ENCODE measurements at regions of chr19 and their contacts with region 1.

Region 1: GRCh38 chr19:39297654-39298634 is 1.7 kb downstream of the IFNL1 start:
- DNase-seq: no peak
- ATAC-seq: peak; percentile 49
- H3K4me3 ChIP-seq: no peak overlapping the region
- H3K27ac ChIP-seq: no peak overlapping the region
- H3K4me1 ChIP-seq: no peaks in the 10 kb centered on the region; the same call in 1 of the 2 replicates
- H3K27me3 ChIP-seq: peaks cover 15% of the 10 kb centered on the region
- CTCF ChIP-seq: no peak

Region 2: DNA sequence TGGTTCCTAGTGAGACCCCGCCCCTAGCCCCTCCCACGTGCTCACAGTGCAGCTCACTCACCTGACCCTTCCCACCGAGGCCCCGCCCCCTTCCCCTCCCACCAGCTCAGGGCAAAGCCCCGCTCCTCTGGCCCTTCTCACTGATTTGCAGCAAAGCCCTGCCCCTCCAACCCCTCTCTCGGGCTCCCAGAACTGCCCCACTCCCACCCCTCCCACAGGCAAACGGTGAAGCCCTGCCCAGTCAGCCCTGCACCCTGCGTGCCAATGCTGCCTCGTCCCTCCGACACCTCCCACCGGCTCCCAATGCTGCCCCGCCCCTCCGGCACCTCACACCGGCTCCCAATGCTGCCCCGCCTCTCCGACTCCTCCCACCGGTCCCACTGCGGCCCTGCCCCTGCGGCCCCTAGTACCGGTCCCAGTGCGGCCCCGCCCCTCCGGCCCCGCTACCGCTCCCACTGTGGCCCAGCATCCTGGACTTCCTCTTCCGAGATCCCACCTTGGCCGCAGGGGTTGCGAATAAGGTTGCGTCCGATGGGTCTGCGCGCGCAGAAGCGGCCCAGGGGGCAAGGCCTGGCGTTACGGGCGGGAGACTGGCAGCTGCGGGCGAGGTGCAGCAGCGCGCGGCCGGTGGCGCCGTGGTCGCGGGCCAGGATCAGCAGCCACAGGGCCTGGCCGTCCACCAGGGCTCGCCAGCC is 266.4 kb before region 1 on chr19:
- CTCF ChIA-PET with region 1: no interaction called
- POLR2A ChIA-PET with region 1: no interaction called
- in situ Hi-C with region 1: no loop called
- intact Hi-C with region 1: no loop called
- DNase-seq: peak; percentile 100
- ATAC-seq: peak; percentile 93
- H3K4me3 ChIP-seq: peak overlapping the region; percentile 46 to 72
- H3K27ac ChIP-seq: peak overlapping the region; percentile 91
- H3K4me1 ChIP-seq: peaks cover 24% of the 10 kb centered on the region
- H3K27me3 ChIP-seq: no peaks in the 10 kb centered on the region
- CTCF ChIP-seq: no peak

Region 3: DNA sequence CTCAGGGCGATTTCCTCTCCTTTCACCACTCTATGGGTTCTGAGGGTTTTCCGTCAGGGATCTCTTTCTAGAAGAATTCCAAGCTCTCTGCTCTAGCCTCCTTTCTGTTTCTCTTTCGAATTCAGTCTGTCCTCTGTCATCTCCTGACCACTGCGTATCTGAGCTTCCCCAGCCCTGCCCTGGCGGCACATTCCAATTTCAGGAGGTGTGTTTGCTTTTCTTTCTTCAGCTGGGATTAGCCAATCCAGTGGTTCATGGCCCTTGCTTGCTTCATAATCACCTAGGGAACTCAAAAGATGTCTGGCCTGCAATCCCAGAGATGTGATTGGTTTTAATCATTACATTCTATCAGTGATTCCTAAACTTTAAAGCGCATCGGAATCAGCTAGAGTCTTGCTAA is 20.3 kb before region 1 on chr19:
- CTCF ChIA-PET with region 1: interaction called, 5 read pairs
- POLR2A ChIA-PET with region 1: interaction called, 13 read pairs
- in situ Hi-C with region 1: no loop called
- intact Hi-C with region 1: no loop called
- DNase-seq: no peak
- ATAC-seq: peak; percentile 27
- H3K4me3 ChIP-seq: no peak overlapping the region
- H3K27ac ChIP-seq: no peak overlapping the region
- H3K4me1 ChIP-seq: no peaks in the 10 kb centered on the region
- H3K27me3 ChIP-seq: peaks cover 8% of the 10 kb centered on the region; the same call in 1 of the 2 replicates
- CTCF ChIP-seq: no peak

Region 4: DNA sequence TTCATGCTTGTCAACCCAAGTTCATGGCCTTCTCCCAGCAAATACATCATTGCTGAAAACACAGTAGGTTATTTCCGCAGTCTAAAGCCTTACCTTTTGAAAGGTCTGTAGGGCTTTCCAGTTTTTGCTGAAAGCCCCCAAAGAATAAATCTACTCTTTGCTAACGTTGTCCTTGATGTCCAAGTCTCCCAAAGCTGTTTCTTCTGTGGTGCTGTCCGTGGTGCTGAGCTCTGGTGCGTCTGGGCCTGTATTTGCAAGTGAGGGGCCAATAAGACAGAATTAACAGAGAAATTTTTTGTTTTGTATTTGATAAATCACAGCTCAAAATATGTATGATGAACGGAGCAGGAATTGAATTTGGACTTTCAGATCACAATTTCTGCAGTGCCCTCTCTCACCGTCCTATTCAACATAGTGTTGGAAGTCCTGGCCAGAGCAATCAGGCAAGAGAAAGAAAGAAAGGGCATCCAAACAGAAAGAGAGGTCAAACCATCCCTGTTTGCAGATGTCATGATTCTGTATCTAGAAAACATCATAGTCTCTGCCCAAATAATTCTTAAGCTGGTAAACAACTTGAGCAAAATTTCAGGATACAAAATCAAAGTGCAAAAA is 348.0 kb after region 1 on chr19:
- CTCF ChIA-PET with region 1: no interaction called
- POLR2A ChIA-PET with region 1: no interaction called
- in situ Hi-C with region 1: no loop called
- intact Hi-C with region 1: no loop called
- DNase-seq: no peak
- ATAC-seq: no peak
- H3K4me3 ChIP-seq: no peak overlapping the region
- H3K27ac ChIP-seq: no peak overlapping the region
- H3K4me1 ChIP-seq: no peaks in the 10 kb centered on the region
- H3K27me3 ChIP-seq: peaks cover 71% of the 10 kb centered on the region
- CTCF ChIP-seq: peak; percentile 19; the same call in 1 of the 2 replicates